MCF 10A (cell line): ENCODE measurements at regions of chr5 and their contacts with region 1.

Region 1: DNA sequence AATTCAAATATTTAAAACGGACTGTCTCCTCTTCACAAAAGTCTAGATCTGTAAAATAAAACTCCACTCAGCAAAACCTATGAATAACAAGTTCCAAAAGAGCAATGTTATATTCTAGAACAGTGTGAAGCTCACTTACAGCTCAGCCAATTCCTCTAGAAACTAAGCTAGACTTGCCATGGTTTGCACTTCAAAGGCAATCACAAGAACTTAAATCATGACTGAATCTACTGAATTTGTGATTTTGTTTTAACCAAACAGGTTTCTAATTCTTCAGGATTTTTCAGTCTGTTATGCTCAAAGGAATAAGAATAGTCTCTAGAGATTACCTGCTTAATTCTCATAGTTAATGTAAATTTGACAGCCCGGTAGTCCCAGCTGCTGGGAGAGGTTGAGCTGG is 1.4 kb upstream of the PKD2L2 start:
- DNase-seq: no peak
- H3K4me3 Mint-ChIP-seq: no peak overlapping the region
- H3K27ac Mint-ChIP-seq: no peak overlapping the region
- H3K4me1 Mint-ChIP-seq: peaks cover 4% of the 10 kb centered on the region
- H3K27me3 Mint-ChIP-seq: no peaks in the 10 kb centered on the region
- CTCF ChIP-seq: no peak

Region 2: GRCh38 chr5:137667341-137667740 is 220.5 kb before region 1 on chr5:
- CTCF ChIA-PET with region 1: no interaction called
- POLR2A ChIA-PET with region 1: no interaction called
- intact Hi-C with region 1: no loop called
- DNase-seq: no peak
- H3K4me3 Mint-ChIP-seq: no peak overlapping the region
- H3K27ac Mint-ChIP-seq: no peak overlapping the region
- H3K4me1 Mint-ChIP-seq: no peaks in the 10 kb centered on the region
- H3K27me3 Mint-ChIP-seq: peaks cover 24% of the 10 kb centered on the region
- CTCF ChIP-seq: no peak

Region 3: DNA sequence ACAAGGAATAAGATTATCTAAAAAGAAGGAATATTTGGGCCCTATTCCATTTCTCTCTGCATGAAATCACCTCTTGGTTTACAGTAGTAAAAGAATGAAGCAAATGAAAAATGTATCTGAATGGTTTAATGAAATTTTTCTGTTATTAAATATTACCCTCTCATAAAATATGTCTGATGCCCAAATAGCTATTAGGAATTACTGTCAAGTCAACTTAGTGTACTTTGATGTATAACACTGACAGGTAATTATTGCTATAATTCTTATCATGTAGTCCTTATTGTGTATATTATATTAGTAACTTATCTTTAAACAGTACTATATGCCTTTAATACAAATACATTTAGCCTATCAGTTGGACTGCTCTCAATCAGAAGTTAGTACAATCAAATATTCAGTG is 11.7 kb before region 1 on chr5:
- CTCF ChIA-PET with region 1: interaction called, 6 read pairs
- POLR2A ChIA-PET with region 1: interaction called, 10 read pairs
- intact Hi-C with region 1: no loop called
- DNase-seq: no peak
- H3K4me3 Mint-ChIP-seq: no peak overlapping the region
- H3K27ac Mint-ChIP-seq: no peak overlapping the region
- H3K4me1 Mint-ChIP-seq: no peaks in the 10 kb centered on the region
- H3K27me3 Mint-ChIP-seq: no peaks in the 10 kb centered on the region
- CTCF ChIP-seq: no peak